ENCODE measurements at regions of chr3 and their contacts with region 1.

Region 1: DNA sequence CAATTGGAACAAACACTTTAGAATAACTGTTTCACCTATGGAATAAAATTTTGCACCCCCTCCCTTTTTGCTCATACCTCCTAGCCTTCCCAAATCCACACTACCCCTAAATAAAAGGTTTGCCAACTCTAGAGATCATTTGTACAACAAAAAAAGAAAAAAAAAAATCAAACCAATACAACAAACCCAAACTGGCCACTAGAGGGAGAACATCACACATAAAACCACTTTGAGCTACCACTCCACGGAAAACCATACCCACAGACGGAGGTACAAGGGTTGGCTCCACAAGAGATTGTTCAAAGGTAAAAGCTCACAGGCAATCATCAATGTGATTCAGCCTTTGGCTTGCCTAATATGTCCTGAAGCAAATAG is 47.6 kb downstream of the SETMAR start:
- DNase-seq: peak in 1 of 2 donors; percentile 66
- ATAC-seq: peak; percentile 71 to 92 (median 86)
- H3K4me3 ChIP-seq: peak overlapping the region in 9 of 10 donors; percentile 1 to 47 (median 43)
- H3K27ac ChIP-seq: peak overlapping the region in 8 of 10 donors; percentile 19 to 73 (median 54)
- H3K4me1 ChIP-seq: peaks cover 0 to 22% (median 9%) of the 10 kb centered on the region in 9 donors
- H3K27me3 ChIP-seq: no peaks in the 10 kb centered on the region
- CTCF ChIP-seq: peak; percentile 70 to 87 (median 77)

Region 2: DNA sequence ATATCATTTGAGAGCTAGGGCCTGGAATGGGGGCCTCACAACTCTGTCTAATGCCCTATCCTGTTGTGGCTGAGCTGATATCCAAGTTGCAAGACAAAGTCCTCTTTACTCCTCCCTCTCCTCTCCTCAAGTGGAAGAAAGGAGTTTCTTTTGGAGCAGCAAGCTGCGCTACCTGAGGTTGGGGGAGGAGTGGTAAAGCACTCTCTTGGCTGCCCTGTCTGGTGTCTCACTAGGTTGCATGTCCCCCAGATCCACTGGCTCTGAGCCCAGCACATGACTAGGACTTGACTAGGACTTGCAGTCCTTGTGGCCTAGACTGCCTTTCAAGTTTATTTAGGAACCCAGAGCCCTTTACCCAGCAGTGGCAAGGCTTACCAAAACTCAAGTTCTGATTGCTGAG is 188.7 kb before region 1 on chr3:
- intact Hi-C with region 1: no loop called
- DNase-seq: peak; percentile 5 to 13
- ATAC-seq: peak in 3 of 8 donors; percentile 61 to 80 (median 65)
- H3K4me3 ChIP-seq: no peak overlapping the region
- H3K27ac ChIP-seq: no peak overlapping the region
- H3K4me1 ChIP-seq: peaks cover 0 to 2% (median 0%) of the 10 kb centered on the region in 9 donors
- H3K27me3 ChIP-seq: no peaks in the 10 kb centered on the region
- CTCF ChIP-seq: no peak

Region 3: DNA sequence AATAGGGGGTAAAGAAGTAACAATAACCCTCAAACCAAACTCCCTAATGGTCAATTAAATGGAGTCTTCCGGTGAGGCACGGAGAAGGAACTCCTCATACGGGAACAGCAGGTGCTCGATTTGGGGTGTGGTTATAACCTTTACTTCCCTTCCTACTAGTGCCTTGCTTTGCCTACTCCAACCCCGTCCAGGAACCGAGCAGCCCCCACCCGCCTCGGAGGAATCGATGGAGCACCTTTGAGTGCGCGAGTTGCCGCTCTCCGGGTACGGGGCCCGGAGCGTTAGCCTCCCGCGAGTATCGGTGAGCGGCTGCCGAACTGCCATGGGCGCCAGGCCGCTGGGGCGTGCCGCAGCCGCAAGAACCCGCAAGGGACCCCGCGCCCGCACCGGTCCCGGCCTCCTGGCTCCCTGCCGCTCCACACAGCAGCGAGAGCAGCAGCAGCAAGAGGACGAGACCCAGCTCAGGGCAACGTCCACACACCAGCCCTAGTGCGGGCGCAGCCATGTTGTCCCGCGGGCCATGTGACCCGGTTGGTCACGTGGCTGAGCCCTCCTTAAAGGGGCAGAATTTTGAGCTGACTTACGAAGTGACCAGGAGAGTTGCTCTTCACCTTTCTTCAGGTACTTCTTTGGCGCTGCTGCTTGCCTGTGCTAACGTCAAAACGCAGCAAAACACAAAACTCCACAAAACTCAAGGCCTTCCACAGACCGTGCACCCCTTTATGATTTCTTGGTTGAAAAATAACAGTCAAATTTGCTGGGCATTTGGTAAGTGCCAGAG is 116.2 kb after region 1 on chr3 and contains the start of gene SUMF1:
- intact Hi-C with region 1: loop called in 1 of 10 experiments (anchors 10 kb)
- DNase-seq: peak; percentile 77 to 79
- ATAC-seq: peak; percentile 98 to 99 (median 98)
- H3K4me3 ChIP-seq: peak within 1 kb of the TSS; percentile 76 to 100 (median 93)
- H3K27ac ChIP-seq: peak within 1 kb of the TSS; percentile 11 to 97 (median 80)
- H3K4me1 ChIP-seq: peaks cover 0 to 23% (median 15%) of the 10 kb centered on the region in 9 donors
- H3K27me3 ChIP-seq: no peaks in the 10 kb centered on the region
- CTCF ChIP-seq: peak in 1 of 9 donors; percentile 4
- total RNA-seq, gene SUMF1: 6.9 to 15.1 (median 8.9) TPM